A549 (cell line): ENCODE measurements at regions of chr10 and their contacts with region 1.

Region 1: GRCh38 chr10:27349987-27350386 is 109.4 kb upstream of the ACBD5 start:
- DNase-seq: no peak
- ATAC-seq: no peak
- H3K4me3 ChIP-seq: no peak overlapping the region
- H3K27ac ChIP-seq: no peak overlapping the region
- H3K4me1 ChIP-seq: no peaks in the 10 kb centered on the region
- CTCF ChIP-seq: no peak
- EP300 ChIP-seq: no peak
- POLR2A ChIP-seq: no peak
- RAD21 ChIP-seq: no peak

Region 2: GRCh38 chr10:27297839-27298521 is 52.0 kb before region 1 on chr10:
- CTCF ChIA-PET with region 1: no interaction called
- POLR2A ChIA-PET with region 1: no interaction called
- DNase-seq: no peak
- ATAC-seq: no peak; a peak in 1 of 6 replicates
- H3K4me3 ChIP-seq: no peak overlapping the region
- H3K27ac ChIP-seq: no peak overlapping the region
- H3K4me1 ChIP-seq: no peaks in the 10 kb centered on the region
- CTCF ChIP-seq: no peak
- EP300 ChIP-seq: no peak
- POLR2A ChIP-seq: no peak
- RAD21 ChIP-seq: no peak

Region 3: DNA sequence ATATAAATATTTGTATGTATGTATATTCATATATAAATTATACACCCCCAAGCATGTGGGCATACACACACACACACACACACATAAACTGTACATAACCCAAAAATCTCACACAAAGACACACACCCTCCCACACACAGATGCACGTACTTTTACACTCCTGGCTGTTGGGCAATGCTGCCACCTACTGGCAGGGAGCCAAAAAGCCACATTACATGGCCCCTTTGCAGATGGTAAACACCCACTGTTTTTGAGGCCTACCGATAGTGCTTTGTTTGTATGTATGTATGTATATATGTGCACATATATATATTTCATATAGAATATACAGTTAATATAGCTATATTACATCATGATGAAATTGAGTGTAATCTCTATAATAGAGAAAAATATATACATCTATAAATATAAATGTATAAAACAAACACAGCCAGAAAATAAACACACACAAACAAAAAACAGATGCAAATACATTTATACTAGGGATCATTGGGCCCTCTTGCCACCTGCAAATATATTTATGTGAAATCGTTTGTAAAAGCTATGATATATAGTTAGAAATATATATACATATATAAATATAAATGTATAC is 10.7 kb after region 1 on chr10:
- CTCF ChIA-PET with region 1: interaction called, 14 read pairs
- POLR2A ChIA-PET with region 1: no interaction called
- DNase-seq: peak; percentile 54 to 81
- ATAC-seq: peak; percentile 86 to 94
- H3K4me3 ChIP-seq: no peak overlapping the region
- H3K27ac ChIP-seq: no peak overlapping the region
- H3K4me1 ChIP-seq: no peaks in the 10 kb centered on the region
- CTCF ChIP-seq: peak; percentile 94
- EP300 ChIP-seq: no peak
- POLR2A ChIP-seq: no peak
- RAD21 ChIP-seq: peak; percentile 94 to 96